ENCODE measurements at regions of chr6 and their contacts with region 1.

Region 1: GRCh38 chr6:130020907-130021629 is 2.7 kb downstream of the L3MBTL3 start:
- DNase-seq: peak; percentile 86
- H3K4me3 ChIP-seq: peak overlapping the region; percentile 71
- H3K27ac ChIP-seq: peak overlapping the region; percentile 13
- H3K4me1 ChIP-seq: peaks cover 9% of the 10 kb centered on the region
- CTCF ChIP-seq: peak; percentile 89

Region 2: GRCh38 chr6:129893640-129894039 is 127.4 kb before region 1 on chr6:
- CTCF ChIA-PET with region 1: interaction called, 3 read pairs
- POLR2A ChIA-PET with region 1: no interaction called
- intact Hi-C with region 1: loop called (anchors 2 kb)
- DNase-seq: peak; percentile 14
- H3K4me3 ChIP-seq: no peak overlapping the region
- H3K27ac ChIP-seq: no peak overlapping the region
- H3K4me1 ChIP-seq: no peaks in the 10 kb centered on the region
- CTCF ChIP-seq: peak; percentile 73

Region 3: DNA sequence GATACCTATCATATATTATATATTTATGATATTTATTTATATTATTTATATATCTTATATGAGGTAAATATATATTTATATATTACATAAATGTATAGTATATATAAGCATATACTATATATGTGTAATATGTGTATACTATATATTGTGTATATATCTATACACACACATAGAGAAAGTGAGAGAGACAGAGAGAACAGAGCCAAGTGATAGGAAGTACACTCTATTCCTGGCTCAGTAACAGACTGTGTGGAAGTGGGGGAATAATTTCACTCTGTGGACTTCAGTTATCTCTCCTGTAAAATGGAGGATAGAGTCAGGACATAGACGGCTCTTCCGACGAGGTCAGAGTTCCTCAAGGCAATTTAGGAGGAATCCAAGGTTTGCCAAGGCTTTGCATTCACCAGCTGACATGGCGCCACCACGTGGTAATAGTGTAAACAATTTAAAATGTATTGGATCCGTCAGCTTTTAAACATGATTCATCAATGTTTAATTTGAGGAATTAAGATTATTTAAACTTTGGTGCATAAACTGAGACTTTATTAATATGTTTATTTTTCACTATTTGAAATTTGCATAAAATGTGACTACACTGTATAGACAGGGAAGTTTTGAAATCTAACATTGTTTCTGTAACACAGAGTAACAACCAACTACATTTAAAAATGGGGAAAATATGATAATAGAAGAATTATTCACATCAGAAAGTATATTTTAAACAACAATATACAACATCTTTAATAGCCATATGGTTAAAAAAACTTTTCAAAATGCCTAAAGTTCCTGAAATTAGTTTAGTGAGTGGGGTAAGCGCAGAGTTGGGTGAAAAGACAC is 84.5 kb before region 1 on chr6:
- CTCF ChIA-PET with region 1: no interaction called
- POLR2A ChIA-PET with region 1: interaction called, 4 read pairs
- intact Hi-C with region 1: loop called (anchors 2 kb)
- DNase-seq: peak; percentile 61
- H3K4me3 ChIP-seq: no peak overlapping the region
- H3K27ac ChIP-seq: no peak overlapping the region
- H3K4me1 ChIP-seq: no peaks in the 10 kb centered on the region
- CTCF ChIP-seq: peak; percentile 97

Region 4: DNA sequence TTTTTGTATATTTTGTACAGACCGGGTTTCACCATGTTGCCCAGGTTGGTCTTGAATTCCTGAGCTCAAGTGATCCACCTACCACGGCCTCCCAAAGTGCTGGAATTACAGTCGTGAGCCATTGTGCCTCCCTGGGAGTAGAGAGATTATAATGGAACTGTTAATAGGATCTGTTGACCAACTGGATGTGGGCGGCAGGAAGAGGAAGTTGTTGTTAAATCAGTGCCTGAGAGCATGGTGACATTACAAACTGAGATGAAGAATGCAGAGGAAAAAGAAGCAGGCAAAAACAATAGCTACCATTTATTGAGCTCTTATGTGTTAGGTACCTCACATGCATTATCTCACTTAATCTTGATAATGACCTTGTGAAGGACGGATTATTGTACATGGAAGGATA is 11.9 kb before region 1 on chr6:
- CTCF ChIA-PET with region 1: no interaction called
- POLR2A ChIA-PET with region 1: no interaction called
- intact Hi-C with region 1: no loop called
- DNase-seq: no peak
- H3K4me3 ChIP-seq: no peak overlapping the region
- H3K27ac ChIP-seq: no peak overlapping the region
- H3K4me1 ChIP-seq: no peaks in the 10 kb centered on the region
- CTCF ChIP-seq: no peak

Region 5: GRCh38 chr6:130129762-130130246 is 108.7 kb after region 1 on chr6:
- CTCF ChIA-PET with region 1: no interaction called
- POLR2A ChIA-PET with region 1: no interaction called
- intact Hi-C with region 1: no loop called
- DNase-seq: no peak
- H3K4me3 ChIP-seq: no peak overlapping the region
- H3K27ac ChIP-seq: no peak overlapping the region
- H3K4me1 ChIP-seq: no peaks in the 10 kb centered on the region
- CTCF ChIP-seq: no peak